GM23248 (cell line): ENCODE measurements at regions of chr3 and their contacts with region 1.

Region 1: GRCh38 chr3:193673845-193674244 is 80.8 kb downstream of the OPA1 start:
- DNase-seq: no peak
- H3K4me3 ChIP-seq: no peak overlapping the region
- H3K27ac ChIP-seq: no peak overlapping the region
- H3K4me1 ChIP-seq: no peaks in the 10 kb centered on the region
- H3K27me3 ChIP-seq: no peaks in the 10 kb centered on the region

Region 2: GRCh38 chr3:193483988-193484539 is 189.8 kb before region 1 on chr3:
- in situ Hi-C with region 1: no loop called
- DNase-seq: no peak
- H3K4me3 ChIP-seq: no peak overlapping the region
- H3K27ac ChIP-seq: no peak overlapping the region
- H3K4me1 ChIP-seq: no peaks in the 10 kb centered on the region
- H3K27me3 ChIP-seq: no peaks in the 10 kb centered on the region

Region 3: DNA sequence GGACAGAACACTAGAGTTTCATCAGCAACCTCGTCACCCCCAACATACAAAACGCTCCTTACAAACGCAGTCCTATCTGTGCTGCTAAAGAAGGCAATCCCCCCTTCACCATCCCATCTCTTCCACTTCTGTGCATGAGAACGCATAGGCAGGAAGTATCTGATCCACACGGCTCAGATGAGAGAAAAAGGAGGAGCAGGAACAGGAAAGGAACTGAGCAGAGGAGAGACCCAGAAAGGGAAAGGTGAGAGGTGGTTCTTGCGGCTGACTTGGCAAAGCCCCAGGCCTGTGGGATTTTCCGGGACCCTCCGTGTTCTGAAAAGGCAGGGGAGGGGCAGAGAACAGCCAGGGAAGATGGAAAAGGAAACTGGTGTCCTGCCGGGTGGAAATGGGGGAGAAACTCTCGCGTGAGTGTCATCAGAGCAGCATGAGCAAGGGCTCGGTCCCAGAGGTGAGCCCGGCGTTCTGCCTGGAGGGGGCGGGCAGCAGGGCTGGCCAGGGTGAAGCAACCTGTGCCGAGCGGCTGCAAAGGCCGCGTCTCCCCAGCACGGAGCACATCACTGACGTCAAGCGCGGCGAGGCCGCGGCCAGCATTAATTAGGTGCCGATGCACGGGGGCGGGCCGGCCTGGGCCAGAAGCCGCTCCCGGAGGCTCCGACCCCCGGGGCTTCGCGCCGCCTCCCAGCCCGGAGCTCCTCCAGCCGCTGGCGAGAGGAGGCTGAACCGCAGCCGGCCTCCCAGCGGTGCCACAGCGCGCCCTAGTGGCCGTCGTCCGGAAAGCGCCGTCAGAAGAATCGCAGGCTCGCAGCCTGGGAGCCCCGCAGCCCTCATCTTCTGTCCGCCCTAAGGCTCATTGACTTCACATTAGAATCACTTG is 641.5 kb after region 1 on chr3:
- in situ Hi-C with region 1: loop called (anchors 10 kb)
- DNase-seq: peak; percentile 88
- H3K4me3 ChIP-seq: peak overlapping the region; percentile 70
- H3K27ac ChIP-seq: no peak overlapping the region
- H3K4me1 ChIP-seq: no peaks in the 10 kb centered on the region; the same call in none of the 2 replicates
- H3K27me3 ChIP-seq: peaks cover 47% of the 10 kb centered on the region